CD4-positive, alpha-beta memory T cell (primary cell): ENCODE measurements at regions of chr2 and their contacts with region 1.

Region 1: DNA sequence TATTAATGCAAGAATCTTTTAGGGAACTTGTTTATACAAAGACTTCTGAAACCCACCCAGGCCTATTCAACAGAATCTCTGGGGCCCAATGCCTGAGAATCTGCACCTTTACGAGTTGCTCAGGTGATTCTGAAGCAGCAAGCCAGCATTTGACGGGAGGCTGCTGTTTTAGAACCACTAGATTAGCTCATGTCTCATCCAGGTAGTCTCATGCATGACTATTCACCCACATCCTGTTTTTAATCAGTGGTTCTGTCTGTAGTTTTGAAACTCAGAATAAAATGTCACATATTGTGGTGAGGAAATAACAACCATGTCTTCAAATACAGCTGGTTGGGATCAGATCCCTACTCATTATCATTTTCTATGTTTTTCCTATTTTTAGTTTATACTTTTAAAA is 39.5 kb downstream of the CYTIP start:
- DNase-seq: peak; percentile 79 to 87 (median 85)
- H3K4me3 ChIP-seq: no peak overlapping the region
- H3K4me3 Mint-ChIP-seq: peak overlapping the region; percentile 49 to 85 (median 68)
- H3K27ac ChIP-seq: peak overlapping the region; percentile 51
- H3K27ac Mint-ChIP-seq: peak overlapping the region; percentile 95 to 100 (median 99)
- H3K4me1 ChIP-seq: peaks cover 60% of the 10 kb centered on the region
- H3K4me1 Mint-ChIP-seq: peaks cover 52 to 76% (median 63%) of the 10 kb centered on the region in 4 donors
- H3K27me3 ChIP-seq: no peaks in the 10 kb centered on the region
- H3K27me3 Mint-ChIP-seq: no peaks in the 10 kb centered on the region

Region 2: DNA sequence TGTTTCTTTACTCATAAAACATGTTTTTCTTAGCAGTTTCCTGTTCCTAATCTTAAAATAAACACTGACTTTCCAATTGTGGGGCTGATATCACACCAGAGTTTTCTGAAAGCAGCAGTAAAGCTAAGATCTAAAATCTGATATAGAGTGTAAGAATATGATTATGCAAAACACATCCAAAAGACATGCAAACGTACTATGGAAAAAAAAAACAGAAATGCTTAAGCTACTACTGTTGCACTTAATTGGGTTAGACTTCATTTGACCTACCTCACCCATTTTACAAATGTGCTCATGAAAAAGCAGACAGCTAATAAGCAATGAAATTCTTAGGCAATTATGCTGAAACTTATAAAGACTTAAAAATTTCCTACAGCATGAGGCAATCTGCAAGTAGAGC is 29.0 kb after region 1 on chr2:
- CTCF ChIA-PET with region 1: interaction called, 16 read pairs
- POLR2A ChIA-PET with region 1: interaction called, 1,017 read pairs
- intact Hi-C with region 1: no loop called
- DNase-seq: no peak
- H3K4me3 ChIP-seq: peak overlapping the region; percentile 8 to 56
- H3K4me3 Mint-ChIP-seq: peak overlapping the region; percentile 78 to 100 (median 92)
- H3K27ac ChIP-seq: peak overlapping the region; percentile 59
- H3K27ac Mint-ChIP-seq: peak overlapping the region; percentile 80 to 99 (median 91)
- H3K4me1 ChIP-seq: peaks cover 84% of the 10 kb centered on the region
- H3K4me1 Mint-ChIP-seq: peaks cover 62 to 96% (median 77%) of the 10 kb centered on the region in 4 donors
- H3K27me3 ChIP-seq: no peaks in the 10 kb centered on the region
- H3K27me3 Mint-ChIP-seq: no peaks in the 10 kb centered on the region